Dorsolateral prefrontal cortex (tissue), 120 donors: ENCODE measurements at regions of chr15 and their contacts with region 1.

Region 1: DNA sequence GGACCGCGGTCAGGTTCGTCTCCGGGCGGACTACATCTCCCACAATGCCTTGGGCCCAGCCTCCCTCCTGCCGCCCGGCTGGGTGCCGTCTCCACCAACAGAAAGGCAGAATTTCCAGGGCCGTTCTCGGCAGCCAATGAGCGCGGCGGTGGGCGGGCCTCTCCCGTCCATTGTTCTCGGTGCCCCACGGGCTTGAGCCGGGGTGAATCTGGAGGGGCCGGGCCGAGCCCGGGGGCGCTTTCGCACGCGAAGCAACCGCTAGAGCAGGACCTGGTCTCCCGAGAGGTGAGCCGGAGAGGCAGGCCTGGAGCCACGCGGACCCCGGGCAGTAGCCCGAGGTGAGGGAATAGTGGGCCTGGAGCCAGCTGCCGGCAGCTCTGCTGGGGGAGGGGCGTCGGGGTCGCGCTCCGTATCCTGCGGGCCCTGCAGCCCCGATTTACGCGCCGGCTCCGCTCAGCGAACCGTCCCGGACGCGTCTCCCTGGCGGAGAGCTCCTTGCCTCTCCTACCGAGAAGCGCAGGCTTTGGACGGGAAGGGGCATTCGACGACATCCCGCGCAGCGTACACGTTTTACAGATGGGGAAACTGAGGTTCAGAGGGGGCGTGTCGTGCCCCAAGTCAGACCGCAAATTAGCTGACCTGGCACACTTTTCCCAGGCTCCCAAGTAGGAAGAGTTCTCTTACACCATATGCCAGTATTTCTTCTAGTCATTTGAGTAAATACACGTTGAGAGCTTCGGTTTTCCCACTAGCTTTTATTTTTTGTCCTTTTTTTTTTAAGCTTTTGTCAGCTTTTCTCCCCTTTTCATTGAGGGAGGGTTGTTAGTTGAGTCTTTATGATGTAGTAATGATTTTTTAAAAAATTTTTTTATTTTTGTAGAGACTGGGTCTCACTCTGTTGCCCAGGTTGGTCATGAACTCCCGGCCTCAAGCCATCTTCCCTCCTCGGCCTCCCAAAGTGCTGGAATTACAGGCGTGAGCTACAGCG is at the start of gene ZSCAN2:
- DNase-seq: peak; percentile 95 to 98 (median 97)
- H3K4me3 ChIP-seq: peak within 1 kb of the TSS; percentile 66 to 100 (median 93)
- H3K27ac ChIP-seq: peak within 1 kb of the TSS in 50 of 59 donors; percentile 0 to 88 (median 68)
- H3K27me3 ChIP-seq: no peaks in the 10 kb centered on the region
- CTCF ChIP-seq: peak in 31 of 56 donors; percentile 9 to 63 (median 29)
- total RNA-seq, gene ZSCAN2: 3.6 to 14.0 (median 7.1) TPM

Region 2: DNA sequence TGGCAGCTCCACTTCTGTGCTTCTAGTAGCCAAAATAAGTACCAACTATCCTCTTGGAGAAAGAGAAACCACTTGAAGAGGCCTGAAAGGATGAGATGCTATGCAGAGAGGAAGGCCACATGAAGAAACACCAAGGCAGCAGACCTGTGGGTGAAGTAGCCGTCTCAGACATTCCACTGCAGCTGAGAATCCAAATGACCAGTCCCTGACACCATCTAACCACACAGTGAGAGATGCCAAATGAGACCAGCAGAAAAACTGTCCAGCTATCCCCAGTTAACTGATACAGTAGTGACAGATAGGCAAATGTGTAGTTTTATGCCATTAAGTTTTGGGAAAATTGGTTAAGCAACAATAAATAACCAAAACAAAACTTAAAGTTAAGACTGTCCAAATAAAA is 48.2 kb before region 1 on chr15:
- intact Hi-C with region 1: no loop called
- DNase-seq: no peak
- H3K4me3 ChIP-seq: no peak overlapping the region
- H3K27ac ChIP-seq: no peak overlapping the region
- H3K27me3 ChIP-seq: no peaks in the 10 kb centered on the region
- CTCF ChIP-seq: no peak

Region 3: DNA sequence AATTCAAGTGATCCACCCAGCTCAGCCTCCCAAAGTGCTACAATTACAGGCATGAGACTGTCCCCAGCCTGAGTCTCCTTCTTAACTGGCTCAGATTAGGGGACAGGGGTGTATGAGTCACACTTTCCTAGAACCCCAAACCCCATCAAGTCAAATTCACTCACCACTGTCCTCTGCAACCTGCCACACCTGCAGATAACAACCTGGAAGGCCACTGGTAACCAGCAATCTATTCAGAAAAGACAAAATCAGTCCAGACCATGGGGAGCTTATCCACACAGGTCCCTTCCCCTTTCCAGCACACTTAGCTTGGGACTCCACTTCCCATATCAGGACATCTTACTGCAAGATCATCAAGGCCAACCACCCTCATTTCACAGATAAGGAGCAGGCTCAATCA is 46.6 kb after region 1 on chr15:
- intact Hi-C with region 1: no loop called
- DNase-seq: peak in 1 of 10 donors; percentile 0
- H3K4me3 ChIP-seq: no peak overlapping the region
- H3K27ac ChIP-seq: peak overlapping the region in 13 of 59 donors; percentile 3 to 65 (median 32)
- H3K27me3 ChIP-seq: no peaks in the 10 kb centered on the region
- CTCF ChIP-seq: no peak

Region 4: DNA sequence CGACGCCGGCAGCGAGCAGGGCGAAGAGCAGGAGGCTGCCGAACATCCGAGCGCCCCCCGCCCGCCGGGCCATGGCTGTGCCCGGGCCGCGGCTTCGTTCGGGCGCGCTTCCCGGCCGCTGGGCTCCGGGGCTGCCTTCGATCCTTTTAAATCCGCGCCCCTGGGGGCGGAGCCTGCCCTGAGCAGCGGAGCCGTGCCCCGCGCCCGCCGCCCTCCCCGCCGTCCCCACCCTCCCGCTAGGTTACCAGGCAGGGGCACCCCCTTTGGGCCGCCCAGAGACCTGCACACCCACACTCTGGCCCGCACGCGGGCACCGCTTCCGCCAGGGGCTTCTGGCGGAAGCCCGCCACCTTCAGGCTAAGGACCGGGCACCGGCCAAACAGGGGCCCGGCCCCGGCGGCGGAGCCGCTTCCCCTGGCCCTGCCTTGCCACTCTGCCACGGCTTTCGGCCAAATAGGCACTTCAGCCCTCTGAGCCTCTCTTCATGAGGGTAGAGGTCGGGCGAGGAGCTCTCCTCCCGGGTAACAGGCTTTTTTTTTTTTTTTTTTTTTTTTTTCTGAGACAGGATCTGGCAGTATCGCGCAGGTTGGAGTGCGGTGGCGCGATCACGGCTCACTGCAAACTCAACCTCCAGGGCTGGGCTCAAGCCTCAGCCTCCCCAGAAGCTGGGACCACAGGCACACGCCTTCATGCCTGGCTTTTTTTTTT is 57.1 kb after region 1 on chr15 and contains the start of gene NMB:
- intact Hi-C with region 1: loop called (anchors 2 to 5 kb)
- DNase-seq: peak; percentile 39 to 75 (median 52)
- H3K4me3 ChIP-seq: peak within 1 kb of the TSS; percentile 53 to 82 (median 71)
- H3K27ac ChIP-seq: peak within 1 kb of the TSS in 57 of 59 donors; percentile 0 to 88 (median 77)
- H3K27me3 ChIP-seq: no peaks in the 10 kb centered on the region
- CTCF ChIP-seq: peak in 54 of 56 donors; percentile 30 to 84 (median 56)
- total RNA-seq, gene NMB: 0.71 to 14.1 (median 4.9) TPM

Region 5: DNA sequence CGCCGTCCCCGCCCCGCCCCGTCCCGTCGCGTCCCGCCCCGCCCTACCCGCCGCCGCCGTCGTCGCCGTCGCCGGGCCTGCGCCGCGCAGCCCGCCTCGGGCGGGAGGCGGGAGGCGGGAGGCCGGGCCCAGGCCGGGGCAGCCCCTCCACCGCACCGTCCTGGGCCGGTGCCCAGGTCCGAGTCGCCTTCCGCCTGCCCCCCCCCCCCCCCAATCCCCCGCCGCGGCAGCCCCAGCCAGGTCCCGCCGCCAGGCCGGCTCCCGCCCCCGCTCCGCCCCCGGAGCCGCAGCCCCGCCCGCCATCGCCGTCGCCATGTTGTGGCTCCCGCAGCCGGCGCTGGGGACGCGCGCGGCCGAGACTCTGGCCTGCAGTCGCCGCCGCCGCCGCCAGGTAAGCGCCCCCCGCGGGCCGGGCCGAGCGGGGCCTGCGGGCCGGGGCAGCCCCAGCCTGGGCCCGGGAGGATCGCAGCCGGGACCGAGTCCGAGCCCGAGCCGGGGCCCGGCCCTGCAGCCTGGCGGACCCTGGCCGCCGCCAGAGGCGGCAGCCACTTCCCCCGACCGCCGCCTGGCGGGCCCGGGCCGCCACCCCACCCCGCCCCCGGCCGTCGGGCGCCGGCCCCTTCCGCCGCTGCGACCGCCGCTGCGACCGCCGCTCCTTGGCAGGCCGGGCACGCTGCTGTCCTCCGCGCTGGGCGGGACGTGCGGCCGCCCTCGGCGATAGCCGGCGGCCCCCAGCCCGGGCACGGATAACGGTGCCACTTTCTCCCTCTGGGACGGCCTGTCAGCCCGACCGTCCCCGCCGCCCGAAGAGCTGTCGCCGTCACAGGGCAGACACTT is 147.3 kb after region 1 on chr15 and contains the start of gene ZNF592:
- intact Hi-C with region 1: loop called in 1 of 2 experiments (anchors 5 kb)
- DNase-seq: peak; percentile 42 to 86 (median 68)
- H3K4me3 ChIP-seq: peak within 1 kb of the TSS; percentile 76 to 98 (median 91)
- H3K27ac ChIP-seq: peak within 1 kb of the TSS; percentile 96 to 100 (median 99)
- H3K27me3 ChIP-seq: no peaks in the 10 kb centered on the region
- CTCF ChIP-seq: peak in 7 of 56 donors; percentile 5 to 44 (median 23)
- total RNA-seq, gene ZNF592: 24.1 to 48.5 (median 30.4) TPM

Region 6: DNA sequence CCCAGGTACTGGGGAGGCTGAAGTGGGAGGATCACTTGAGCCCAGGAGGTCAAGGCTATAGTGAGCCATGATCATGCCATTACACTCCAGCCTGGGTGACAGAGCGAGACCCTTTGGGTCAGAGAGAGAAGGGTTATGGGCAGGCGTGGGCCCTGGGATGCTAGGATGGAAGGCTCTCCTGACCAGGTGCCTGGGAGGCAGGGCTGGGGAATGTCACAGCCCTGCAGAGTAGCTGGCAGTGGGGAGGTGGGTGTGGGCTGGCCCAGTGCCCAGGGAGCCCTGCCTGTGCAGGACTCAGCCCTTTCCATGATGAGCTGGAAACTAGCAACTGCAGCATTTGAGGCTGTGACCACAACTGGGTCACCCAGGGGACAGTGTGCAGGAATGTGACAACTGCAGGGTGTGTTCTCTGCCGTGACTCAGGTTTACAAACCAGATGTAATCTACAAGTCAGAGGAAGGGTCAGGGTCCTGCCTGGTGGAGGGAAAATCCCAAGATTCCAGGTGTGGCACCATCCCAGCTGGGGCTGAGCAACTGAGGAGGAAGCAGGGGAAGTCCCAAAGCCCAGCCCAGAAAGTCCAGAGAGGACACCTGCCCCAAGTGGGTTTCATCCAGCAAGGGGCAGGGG is 328.7 kb after region 1 on chr15:
- intact Hi-C with region 1: loop called in 1 of 2 experiments (anchors 10 kb)
- DNase-seq: no peak
- H3K4me3 ChIP-seq: no peak overlapping the region
- H3K27ac ChIP-seq: no peak overlapping the region
- H3K27me3 ChIP-seq: no peaks in the 10 kb centered on the region
- CTCF ChIP-seq: no peak

Region 7: DNA sequence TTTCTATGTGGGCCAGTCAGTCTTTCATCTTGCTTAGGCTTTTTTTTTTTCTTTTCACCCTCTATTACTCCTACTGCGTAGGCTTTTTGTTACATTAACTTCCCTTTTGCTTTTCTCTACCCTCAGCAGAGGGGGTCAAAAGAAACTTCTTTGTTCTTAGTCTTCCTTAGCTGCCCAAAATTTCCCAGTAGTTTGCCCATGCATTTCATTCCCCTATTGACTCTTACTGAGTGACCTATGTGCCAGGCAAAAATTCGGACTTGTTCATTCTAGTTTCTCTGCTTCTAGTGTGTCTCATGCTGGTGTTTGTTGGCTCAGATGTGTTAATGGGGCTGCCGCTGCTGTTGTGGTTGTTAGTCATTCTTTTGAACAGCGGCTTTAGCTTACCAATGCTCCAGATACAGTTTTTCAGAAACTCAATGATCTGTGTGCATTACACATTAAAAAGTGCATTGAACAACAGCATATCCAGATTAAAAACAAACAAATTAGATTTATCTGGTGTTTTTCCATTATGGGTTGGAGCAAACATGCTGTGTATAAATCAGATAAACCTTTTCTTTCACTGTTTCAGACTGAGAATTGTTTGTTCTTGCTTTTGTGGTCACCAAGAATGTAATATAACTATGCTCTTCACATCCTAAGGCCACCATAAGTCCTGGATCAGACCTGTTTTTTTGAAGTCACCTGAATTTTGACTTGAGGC is 423.5 kb after region 1 on chr15:
- intact Hi-C with region 1: no loop called
- DNase-seq: no peak
- H3K4me3 ChIP-seq: peak overlapping the region in 18 of 59 donors; percentile 0 to 37 (median 10)
- H3K27ac ChIP-seq: peak overlapping the region; percentile 11 to 95 (median 80)
- H3K27me3 ChIP-seq: no peaks in the 10 kb centered on the region
- CTCF ChIP-seq: no peak

Region 8: DNA sequence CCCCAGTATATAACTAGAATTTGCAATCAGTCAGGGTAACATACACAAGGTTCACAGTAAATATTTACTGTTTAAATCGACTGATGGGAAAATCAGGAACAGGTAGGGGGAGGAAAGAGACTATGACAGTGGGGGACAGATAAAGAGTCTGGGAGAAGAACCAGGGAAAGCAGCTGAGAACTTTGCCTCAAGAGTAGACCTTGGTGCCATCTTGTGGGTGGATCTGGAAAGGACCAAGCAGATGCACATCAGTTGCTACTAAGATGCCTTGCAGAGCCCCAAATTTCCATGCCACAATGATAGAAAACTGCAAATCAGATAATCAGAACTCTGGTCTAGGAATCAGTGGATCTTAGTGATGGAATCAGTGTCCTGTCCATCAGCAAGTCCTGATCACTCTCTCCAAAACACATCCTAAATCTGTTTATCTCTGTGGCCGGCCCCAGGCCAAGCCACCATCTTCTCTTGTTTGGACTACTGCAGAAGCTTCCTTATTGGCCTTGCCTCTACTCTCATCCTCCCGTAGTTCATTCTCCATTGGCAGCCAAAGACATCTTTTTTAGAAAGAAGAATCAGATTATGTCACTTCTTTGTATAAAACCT is 443.2 kb after region 1 on chr15:
- intact Hi-C with region 1: loop called (anchors 10 kb)
- DNase-seq: peak in 9 of 10 donors; percentile 35 to 89 (median 72)
- H3K4me3 ChIP-seq: no peak overlapping the region
- H3K27ac ChIP-seq: peak overlapping the region; percentile 10 to 95 (median 87)
- H3K27me3 ChIP-seq: no peaks in the 10 kb centered on the region
- CTCF ChIP-seq: peak in 55 of 56 donors; percentile 42 to 90 (median 77)